Naive thymus-derived CD8-positive, alpha-beta T cell (primary cell): ENCODE measurements at regions of chr7 and their contacts with region 1.

Region 1: GRCh38 chr7:107168233-107169119 is at the start of gene HBP1:
- DNase-seq: peak; percentile 85 to 100 (median 98)
- ATAC-seq: peak; percentile 79 to 83
- H3K4me3 Mint-ChIP-seq: peak within 1 kb of the TSS; percentile 92 to 99 (median 96)
- H3K27ac Mint-ChIP-seq: peak within 1 kb of the TSS; percentile 98 to 100 (median 99)
- H3K4me1 Mint-ChIP-seq: peaks cover 14 to 53% (median 36%) of the 10 kb centered on the region in 4 donors
- H3K27me3 Mint-ChIP-seq: peaks cover 0 to 6% (median 0%) of the 10 kb centered on the region in 5 donors
- polyA plus RNA-seq, gene HBP1: 49.6 to 55.6 (median 50.3) TPM

Region 2: GRCh38 chr7:106865130-106866041 is 303.1 kb before region 1 on chr7 and contains the start of gene PIK3CG:
- POLR2A ChIA-PET with region 1: interaction called, 34 read pairs
- DNase-seq: peak in 6 of 10 donors; percentile 13 to 75 (median 47)
- ATAC-seq: peak; percentile 94 to 96
- H3K4me3 Mint-ChIP-seq: peak within 1 kb of the TSS; percentile 83 to 95 (median 92)
- H3K27ac Mint-ChIP-seq: peak within 1 kb of the TSS; percentile 89 to 95 (median 94)
- H3K4me1 Mint-ChIP-seq: peaks cover 25 to 79% (median 74%) of the 10 kb centered on the region in 4 donors
- H3K27me3 Mint-ChIP-seq: no peaks in the 10 kb centered on the region
- polyA plus RNA-seq, gene PIK3CG: 18.3 to 23.0 (median 19.5) TPM

Region 3: DNA sequence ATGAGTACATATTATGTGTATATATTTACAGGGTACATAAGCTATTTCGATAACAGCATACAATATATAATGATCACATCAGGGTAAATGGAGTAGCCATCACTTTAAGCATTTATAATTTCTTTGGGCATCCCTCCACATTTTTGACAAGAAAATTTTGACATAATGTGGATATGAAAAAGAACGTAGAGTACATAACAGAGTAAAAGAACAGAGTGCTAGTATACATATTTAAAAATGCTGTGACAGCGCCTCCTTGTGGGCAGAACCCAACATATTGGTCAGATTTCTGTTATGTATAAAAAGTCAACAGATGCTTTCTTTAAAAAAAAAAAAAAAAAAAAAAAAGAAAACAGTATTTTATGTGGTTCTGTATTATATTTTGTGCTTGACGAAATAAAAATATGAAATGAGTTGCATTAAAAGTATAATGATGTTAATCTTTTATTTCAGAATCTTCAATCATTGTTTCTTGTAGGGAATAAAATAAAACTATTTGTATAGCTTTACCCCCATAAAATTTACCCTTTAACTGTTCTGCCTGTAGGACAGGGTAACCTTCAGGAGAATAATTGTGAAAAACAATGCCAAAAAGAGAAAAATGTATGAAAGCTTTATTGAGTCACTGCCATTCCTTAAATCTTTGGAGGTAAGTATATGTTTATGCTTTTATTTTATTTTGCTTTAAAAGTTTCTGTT is 18.0 kb before region 1 on chr7:
- POLR2A ChIA-PET with region 1: interaction called, 24 read pairs
- DNase-seq: peak; percentile 61 to 86 (median 74)
- ATAC-seq: peak; percentile 87 to 88
- H3K4me3 Mint-ChIP-seq: no peak overlapping the region
- H3K27ac Mint-ChIP-seq: no peak overlapping the region
- H3K4me1 Mint-ChIP-seq: peaks cover 0 to 5% (median 3%) of the 10 kb centered on the region in 4 donors
- H3K27me3 Mint-ChIP-seq: no peaks in the 10 kb centered on the region

Region 4: GRCh38 chr7:107201795-107202450 is 33.4 kb after region 1 on chr7:
- POLR2A ChIA-PET with region 1: interaction called, 14 read pairs
- DNase-seq: peak in 2 of 10 donors; percentile 9 to 26
- ATAC-seq: peak; percentile 40 to 54
- H3K4me3 Mint-ChIP-seq: no peak overlapping the region
- H3K27ac Mint-ChIP-seq: peak overlapping the region in 3 of 10 donors; percentile 10 to 33 (median 23)
- H3K4me1 Mint-ChIP-seq: peaks cover 0 to 4% (median 0%) of the 10 kb centered on the region in 4 donors
- H3K27me3 Mint-ChIP-seq: no peaks in the 10 kb centered on the region

Region 5: DNA sequence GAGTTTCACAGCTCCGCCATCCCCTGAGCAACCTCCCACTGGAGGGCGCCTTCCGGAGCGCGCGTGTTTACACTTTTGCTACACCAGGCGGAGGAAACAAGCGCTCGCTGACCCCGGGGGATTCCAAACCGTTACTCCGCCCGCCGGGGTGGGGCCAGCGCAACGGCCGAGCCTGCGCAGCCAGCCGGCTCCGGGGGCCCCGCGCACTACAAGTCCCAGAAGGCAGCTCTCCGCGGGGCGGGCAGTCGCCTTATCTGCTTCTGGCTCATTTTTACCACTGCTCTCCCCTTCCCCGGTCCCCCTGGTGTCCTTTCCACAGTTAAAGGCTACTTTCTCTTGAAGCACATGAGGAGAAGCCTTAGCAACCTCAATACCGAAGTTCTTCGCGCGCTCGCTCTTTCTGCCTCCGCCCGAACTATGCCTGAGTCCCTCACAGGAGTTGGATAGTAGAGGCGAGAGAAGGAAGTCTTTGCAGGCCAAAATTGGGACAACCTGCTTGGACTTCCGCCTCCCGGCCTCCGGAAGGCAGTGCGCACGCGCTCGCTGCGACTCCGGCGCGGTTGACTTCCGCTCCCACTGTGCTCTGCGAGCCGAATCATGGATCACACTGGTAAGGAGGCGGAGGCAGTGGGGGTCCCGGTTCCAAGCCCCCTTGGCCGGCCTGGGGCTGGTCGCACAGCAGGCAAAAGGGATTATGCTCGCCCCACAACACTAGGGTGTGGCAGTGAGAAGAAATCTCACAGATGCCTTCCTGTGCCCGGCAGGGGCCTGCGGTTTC is 575.3 kb after region 1 on chr7 and contains the start of gene CBLL1:
- POLR2A ChIA-PET with region 1: interaction called, 67 read pairs
- DNase-seq: peak; percentile 94 to 98 (median 97)
- ATAC-seq: peak; percentile 90 to 91
- H3K4me3 Mint-ChIP-seq: peak within 1 kb of the TSS; percentile 90 to 100 (median 98)
- H3K27ac Mint-ChIP-seq: peak within 1 kb of the TSS; percentile 99 to 100 (median 100)
- H3K4me1 Mint-ChIP-seq: peaks cover 17 to 59% (median 42%) of the 10 kb centered on the region in 4 donors
- H3K27me3 Mint-ChIP-seq: no peaks in the 10 kb centered on the region
- polyA plus RNA-seq, gene CBLL1: 44.8 to 56.3 (median 48.6) TPM